SK-N-SH (cell line): ENCODE measurements at regions of chr5 and their contacts with region 1.

Region 1: GRCh38 chr5:146426853-146427618 is 20.1 kb upstream of the TCERG1 start:
- DNase-seq: peak; percentile 49
- H3K4me3 ChIP-seq: no peak overlapping the region
- H3K27ac ChIP-seq: no peak overlapping the region
- H3K4me1 ChIP-seq: no peaks in the 10 kb centered on the region; a peak in 1 of 4 replicates
- H3K27me3 ChIP-seq: peaks cover 10% of the 10 kb centered on the region; the same call in 1 of the 2 replicates
- CTCF ChIP-seq: peak; percentile 77
- EP300 ChIP-seq: no peak
- RAD21 ChIP-seq: peak; percentile 94

Region 2: GRCh38 chr5:146291421-146292074 is 135.5 kb before region 1 on chr5:
- CTCF ChIA-PET with region 1: interaction called, 11 read pairs
- POLR2A ChIA-PET with region 1: no interaction called
- DNase-seq: peak; percentile 56
- H3K4me3 ChIP-seq: no peak overlapping the region
- H3K27ac ChIP-seq: no peak overlapping the region
- H3K4me1 ChIP-seq: no peaks in the 10 kb centered on the region; a peak in 1 of 4 replicates
- H3K27me3 ChIP-seq: no peaks in the 10 kb centered on the region
- CTCF ChIP-seq: peak; percentile 77
- EP300 ChIP-seq: no peak
- RAD21 ChIP-seq: peak; percentile 74

Region 3: DNA sequence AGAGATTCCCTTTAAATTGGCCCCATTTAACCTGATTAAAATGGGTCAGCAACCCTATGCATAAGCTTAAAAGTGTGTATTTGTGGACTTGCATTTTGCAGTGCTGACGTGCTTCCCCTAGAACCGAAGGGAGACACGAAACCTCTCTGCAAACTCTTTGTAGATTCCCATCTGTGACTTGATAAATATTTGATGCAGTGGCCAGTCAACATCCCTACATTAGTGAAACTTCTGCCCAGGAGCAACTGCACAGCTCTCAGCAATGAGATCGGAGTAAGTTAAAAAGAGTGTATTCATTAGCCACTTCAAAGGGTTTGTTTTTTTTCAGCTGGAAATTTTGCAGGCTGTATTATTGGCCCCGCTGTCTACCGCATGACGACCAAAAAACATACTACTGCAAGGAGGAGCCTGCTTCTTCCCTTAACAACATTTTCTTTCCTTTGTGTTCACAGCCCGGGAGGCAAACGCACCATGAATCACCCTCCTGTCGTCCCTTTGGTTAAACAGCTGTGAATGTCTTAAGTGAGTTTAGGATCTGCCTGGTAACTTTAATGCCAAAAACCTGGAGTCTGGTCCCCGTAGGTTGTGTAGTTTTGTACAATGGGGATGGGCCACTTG is 17.9 kb before region 1 on chr5:
- CTCF ChIA-PET with region 1: interaction called, 32 read pairs
- POLR2A ChIA-PET with region 1: no interaction called
- DNase-seq: no peak
- H3K4me3 ChIP-seq: no peak overlapping the region
- H3K27ac ChIP-seq: no peak overlapping the region
- H3K4me1 ChIP-seq: no peaks in the 10 kb centered on the region
- H3K27me3 ChIP-seq: 0 out of 2 replicates have a peak, but pooled peaks cover 7% of the 10 kb centered on the region
- CTCF ChIP-seq: no peak
- EP300 ChIP-seq: no peak
- RAD21 ChIP-seq: no peak

Region 4: DNA sequence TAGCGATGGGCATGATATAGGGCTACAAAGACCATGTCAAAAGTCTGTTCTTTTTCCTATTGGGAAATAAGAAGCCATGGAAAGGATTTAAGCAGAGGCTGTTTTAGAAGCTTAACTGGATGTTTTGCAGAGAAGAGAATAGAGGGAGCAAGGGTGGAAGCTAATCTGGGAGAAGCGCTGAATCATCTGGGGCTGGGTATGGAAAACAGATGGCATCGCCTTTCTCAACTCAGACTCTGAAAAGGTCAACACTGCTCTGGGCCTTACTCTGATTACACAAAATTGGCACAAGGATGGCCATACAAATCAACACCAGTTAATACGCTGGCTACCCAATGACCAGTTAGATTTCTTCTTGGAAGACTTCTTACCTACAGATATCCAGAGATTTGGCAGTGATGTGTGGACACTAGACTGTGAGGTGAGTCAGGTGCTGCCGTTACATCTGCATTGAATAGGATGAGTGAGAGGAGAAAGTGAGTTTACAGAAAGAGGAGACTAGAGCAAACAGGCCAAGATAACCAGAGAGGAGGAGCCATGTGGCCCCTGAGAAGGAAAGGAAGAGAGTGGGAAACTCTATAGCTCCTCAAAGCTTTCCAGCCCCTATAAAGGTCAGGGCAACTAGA is 13.9 kb after region 1 on chr5:
- CTCF ChIA-PET with region 1: interaction called, 10 read pairs
- POLR2A ChIA-PET with region 1: no interaction called
- DNase-seq: no peak
- H3K4me3 ChIP-seq: no peak overlapping the region
- H3K27ac ChIP-seq: no peak overlapping the region
- H3K4me1 ChIP-seq: no peaks in the 10 kb centered on the region
- H3K27me3 ChIP-seq: no peaks in the 10 kb centered on the region
- CTCF ChIP-seq: no peak
- EP300 ChIP-seq: no peak
- RAD21 ChIP-seq: no peak

Region 5: DNA sequence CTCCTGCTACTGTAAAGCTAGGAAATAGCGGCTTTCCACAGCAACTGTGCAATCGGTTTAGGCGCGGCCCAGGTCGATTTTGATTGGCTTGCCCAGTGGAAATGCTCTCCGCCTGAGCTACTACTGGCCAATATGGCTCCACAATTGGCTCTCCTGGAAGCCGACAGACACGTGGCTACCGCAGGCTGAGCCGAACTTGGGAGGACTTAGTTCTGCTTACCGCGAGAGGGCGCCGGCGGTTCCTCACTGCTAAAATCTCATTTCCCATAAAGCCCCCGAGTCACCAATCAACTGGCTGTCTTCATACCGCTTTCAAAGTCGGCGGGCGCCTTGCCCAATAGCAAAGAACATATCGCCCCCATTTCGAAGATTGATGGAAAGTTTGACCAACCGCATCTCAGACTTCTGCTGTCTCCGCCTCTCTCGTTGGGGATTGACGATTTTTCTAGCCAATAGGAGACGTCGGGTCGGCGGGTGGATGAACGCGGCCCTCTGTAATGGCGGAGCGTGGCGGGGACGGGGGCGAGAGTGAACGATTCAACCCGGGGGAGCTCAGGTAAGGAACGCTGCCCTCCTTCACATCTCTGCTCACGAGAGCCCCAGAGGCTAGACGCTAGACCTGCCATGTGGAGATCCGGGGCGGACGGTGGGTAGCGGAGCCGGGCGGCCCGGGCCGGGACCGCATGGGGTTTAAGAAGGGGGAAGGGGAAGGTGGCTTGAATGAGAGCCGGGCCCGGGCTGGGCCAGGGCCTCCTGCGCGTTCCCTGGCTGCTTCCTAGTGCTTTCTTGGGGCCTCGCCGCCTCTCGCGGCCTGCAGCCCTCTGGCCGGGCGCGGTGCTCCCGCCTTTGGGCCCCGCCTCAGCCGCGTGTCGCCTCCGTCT is 20.1 kb after region 1 on chr5 and contains the start of gene TCERG1:
- CTCF ChIA-PET with region 1: interaction called, 10 read pairs
- POLR2A ChIA-PET with region 1: no interaction called
- DNase-seq: peak; percentile 93
- H3K4me3 ChIP-seq: peak within 1 kb of the TSS; percentile 89 to 98
- H3K27ac ChIP-seq: peak within 1 kb of the TSS; percentile 84 to 86
- H3K4me1 ChIP-seq: peaks cover 14% of the 10 kb centered on the region in 2 experiments; a peak in 3 of 4 replicates
- H3K27me3 ChIP-seq: no peaks in the 10 kb centered on the region
- CTCF ChIP-seq: peak; percentile 76
- EP300 ChIP-seq: peak in 1 of 2 experiments; percentile 39; a peak in 2 of 4 replicates
- RAD21 ChIP-seq: no peak
- polyA plus RNA-seq, gene TCERG1: 38.5 and 47.3 TPM in 2 replicates